ENCODE measurements at regions of chr1 and their contacts with region 1.

Region 1: DNA sequence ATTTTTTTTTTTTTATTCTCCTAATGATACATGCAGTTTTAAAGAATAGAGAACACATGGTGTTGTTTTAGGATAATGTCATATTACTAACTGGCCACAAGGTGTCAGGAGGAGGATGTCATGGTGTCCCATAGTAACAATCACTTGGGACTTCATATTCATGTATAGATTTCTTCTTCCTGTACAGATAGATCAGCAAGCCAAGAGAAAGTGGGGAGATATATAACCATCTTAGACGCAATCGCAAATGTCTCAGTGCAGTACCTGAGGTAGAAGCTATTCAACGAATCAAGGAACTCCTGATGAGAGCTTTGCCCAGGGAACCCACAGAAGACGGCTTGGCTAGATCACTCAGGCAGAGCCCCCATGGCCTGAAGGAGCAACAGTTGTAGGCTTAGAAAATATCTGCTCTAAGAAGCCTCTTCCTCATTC is 12.3 kb downstream of the OR2T11 start:
- DNase-seq: peak; percentile 44 to 54
- ATAC-seq: peak; percentile 82 to 85
- H3K4me3 ChIP-seq: no peak overlapping the region
- H3K27ac ChIP-seq: no peak overlapping the region
- H3K4me1 ChIP-seq: no peaks in the 10 kb centered on the region
- CTCF ChIP-seq: peak; percentile 43
- EP300 ChIP-seq: no peak
- POLR2A ChIP-seq: no peak
- RAD21 ChIP-seq: peak; percentile 53 to 67

Region 2: GRCh38 chr1:246959944-246960693 is 1662.5 kb before region 1 on chr1:
- CTCF ChIA-PET with region 1: no interaction called
- POLR2A ChIA-PET with region 1: no interaction called
- DNase-seq: no peak
- ATAC-seq: no peak
- H3K4me3 ChIP-seq: no peak overlapping the region
- H3K27ac ChIP-seq: no peak overlapping the region
- H3K4me1 ChIP-seq: no peaks in the 10 kb centered on the region
- CTCF ChIP-seq: no peak
- EP300 ChIP-seq: no peak
- POLR2A ChIP-seq: no peak
- RAD21 ChIP-seq: no peak

Region 3: GRCh38 chr1:248703674-248704073 is 81.1 kb after region 1 on chr1:
- CTCF ChIA-PET with region 1: no interaction called
- POLR2A ChIA-PET with region 1: no interaction called
- DNase-seq: no peak
- ATAC-seq: no peak
- H3K4me3 ChIP-seq: no peak overlapping the region
- H3K27ac ChIP-seq: no peak overlapping the region
- H3K4me1 ChIP-seq: no peaks in the 10 kb centered on the region
- CTCF ChIP-seq: peak; percentile 24; the same call in 2 of the 3 replicates
- EP300 ChIP-seq: no peak
- POLR2A ChIP-seq: no peak
- RAD21 ChIP-seq: peak; percentile 27 to 31; a peak in 3 of 5 replicates

Region 4: GRCh38 chr1:248804771-248805681 is 182.4 kb after region 1 on chr1:
- CTCF ChIA-PET with region 1: interaction called, 12 read pairs
- POLR2A ChIA-PET with region 1: no interaction called
- DNase-seq: no peak
- ATAC-seq: peak in 1 of 2 experiments; percentile 9; a peak in 2 of 6 replicates
- H3K4me3 ChIP-seq: no peak overlapping the region
- H3K27ac ChIP-seq: no peak overlapping the region
- H3K4me1 ChIP-seq: no peaks in the 10 kb centered on the region
- CTCF ChIP-seq: no peak
- EP300 ChIP-seq: no peak
- POLR2A ChIP-seq: no peak
- RAD21 ChIP-seq: no peak

Measured in A549 (cell line).